ENCODE measurements at regions of chr1 and their contacts with region 1.

Region 1: GRCh38 chr1:239951511-239952140 is 140.1 kb upstream of the FMN2 start:
- DNase-seq: peak in 6 of 10 donors; percentile 53 to 86 (median 68)

Region 2: GRCh38 chr1:239976130-239976968 is 24.7 kb after region 1 on chr1:
- intact Hi-C with region 1: loop called (anchors 1 kb)
- DNase-seq: peak in 8 of 10 donors; percentile 26 to 94 (median 64)